CD4-positive, alpha-beta memory T cell (primary cell): ENCODE measurements at regions of chr12 and their contacts with region 1.

Region 1: DNA sequence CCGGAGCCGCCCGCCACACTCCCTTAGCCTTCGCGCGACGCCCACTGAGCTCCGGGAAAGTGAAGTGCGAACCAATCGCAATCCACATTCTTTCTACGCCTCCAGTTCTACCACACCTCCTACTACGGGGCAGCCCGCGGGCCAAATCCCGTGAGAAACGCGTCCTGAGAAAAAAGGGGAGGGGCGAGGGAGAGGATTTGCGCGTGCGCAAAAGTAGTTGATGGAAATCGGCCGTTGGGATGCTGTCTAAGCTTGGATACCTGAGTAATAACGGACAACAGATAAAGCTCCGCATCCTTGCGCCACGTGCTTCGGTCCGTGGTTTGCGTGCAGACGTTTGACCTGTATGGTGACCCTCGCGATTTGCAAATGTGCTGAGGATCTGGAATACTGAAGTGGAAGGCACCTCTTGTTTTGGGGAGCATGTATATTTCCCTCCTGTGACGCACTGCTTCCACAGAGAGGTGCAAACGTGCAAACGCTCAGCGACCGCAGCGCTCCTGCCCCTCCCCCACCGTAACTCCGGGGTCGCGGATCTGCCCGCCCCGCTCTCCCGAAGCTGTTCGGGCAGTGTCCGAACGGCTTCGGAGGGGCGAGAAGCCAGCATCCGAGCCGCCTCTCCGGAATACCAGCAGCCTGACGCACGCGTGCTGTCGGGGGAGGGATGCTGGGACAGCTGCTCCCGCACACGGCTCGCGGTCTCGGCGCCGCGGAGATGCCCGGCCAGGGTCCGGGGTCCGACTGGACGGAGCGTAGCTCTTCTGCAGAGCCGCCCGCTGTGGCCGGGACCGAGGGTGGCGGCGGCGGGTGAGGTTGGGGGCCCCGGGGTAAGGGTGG is at the starts of genes FAM216A and GPN3:
- DNase-seq: peak; percentile 97 to 98 (median 98)
- H3K4me3 ChIP-seq: peak within 1 kb of the TSS; percentile 93 to 97
- H3K4me3 Mint-ChIP-seq: peak within 1 kb of the TSS; percentile 96 to 100 (median 98)
- H3K27ac ChIP-seq: peak within 1 kb of the TSS; percentile 75
- H3K27ac Mint-ChIP-seq: peak within 1 kb of the TSS; percentile 91 to 98 (median 96)
- H3K4me1 ChIP-seq: peaks cover 25% of the 10 kb centered on the region
- H3K4me1 Mint-ChIP-seq: peaks cover 17 to 45% (median 34%) of the 10 kb centered on the region in 4 donors
- H3K27me3 ChIP-seq: no peaks in the 10 kb centered on the region
- H3K27me3 Mint-ChIP-seq: no peaks in the 10 kb centered on the region
- total RNA-seq, gene FAM216A: 16.4 to 16.9 TPM
- total RNA-seq, gene GPN3: 12.5 to 16.6 TPM

Region 2: DNA sequence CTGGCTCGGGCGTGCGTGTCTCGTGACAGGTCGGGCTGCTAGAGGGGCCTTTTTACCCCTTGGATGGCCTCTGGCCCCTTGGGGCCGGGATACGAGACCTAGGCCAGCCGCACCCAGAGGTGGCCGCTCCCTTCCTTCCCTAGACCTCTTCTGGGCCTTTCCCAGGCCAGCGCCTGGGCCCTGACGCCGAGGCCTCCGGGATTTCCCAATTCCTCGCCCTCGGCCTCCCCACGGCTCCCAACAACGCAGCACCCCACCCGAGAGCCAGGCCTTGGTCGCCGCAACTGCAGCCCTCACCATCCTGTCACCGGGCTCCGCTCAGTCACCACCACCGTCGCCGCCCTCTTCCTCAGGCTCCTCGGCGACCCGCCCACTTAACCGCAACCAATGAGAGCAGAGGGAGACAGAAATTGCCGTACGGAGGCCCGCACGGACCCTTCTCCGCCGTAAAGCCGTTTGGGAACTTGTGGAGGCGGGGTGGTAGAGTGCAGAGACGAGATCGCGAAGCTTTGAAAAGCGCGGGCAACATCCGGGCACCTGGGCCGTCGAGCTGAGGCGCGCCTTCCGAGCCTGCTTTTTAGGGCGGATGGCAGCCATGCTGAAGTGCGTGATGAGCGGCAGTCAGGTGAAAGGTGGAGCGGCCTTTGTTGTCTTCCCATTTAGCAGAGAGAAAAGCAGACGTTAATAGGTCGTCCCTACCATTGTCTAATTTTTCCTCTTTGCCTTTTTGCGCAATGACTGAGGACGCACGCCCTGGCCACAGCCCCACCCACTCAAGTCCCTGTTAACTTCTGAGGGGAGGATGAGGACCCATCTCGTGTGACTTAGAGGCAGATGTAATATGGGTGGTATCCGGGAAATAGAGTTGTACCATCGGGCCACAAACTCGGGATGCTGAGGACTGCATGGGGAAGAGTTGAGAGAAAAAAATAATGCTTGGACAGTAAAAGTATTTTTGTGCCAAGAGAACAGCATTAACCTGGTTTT is 33.6 kb after region 1 on chr12 and contains the starts of genes RAD9B and VPS29:
- CTCF ChIA-PET with region 1: interaction called, 43 read pairs
- POLR2A ChIA-PET with region 1: interaction called, 74 read pairs
- intact Hi-C with region 1: loop called (anchors 1 kb)
- DNase-seq: peak; percentile 99 to 100 (median 99)
- H3K4me3 ChIP-seq: peak within 1 kb of the TSS; percentile 85 to 91
- H3K4me3 Mint-ChIP-seq: peak within 1 kb of the TSS; percentile 96 to 99 (median 98)
- H3K27ac ChIP-seq: peak within 1 kb of the TSS; percentile 94
- H3K27ac Mint-ChIP-seq: peak within 1 kb of the TSS; percentile 95 to 99 (median 97)
- H3K4me1 ChIP-seq: peaks cover 35% of the 10 kb centered on the region
- H3K4me1 Mint-ChIP-seq: peaks cover 20 to 44% (median 30%) of the 10 kb centered on the region in 4 donors
- H3K27me3 ChIP-seq: no peaks in the 10 kb centered on the region
- H3K27me3 Mint-ChIP-seq: no peaks in the 10 kb centered on the region
- total RNA-seq, gene RAD9B: 1.1 to 2.1 TPM
- total RNA-seq, gene VPS29: 117 to 121 TPM

Region 3: DNA sequence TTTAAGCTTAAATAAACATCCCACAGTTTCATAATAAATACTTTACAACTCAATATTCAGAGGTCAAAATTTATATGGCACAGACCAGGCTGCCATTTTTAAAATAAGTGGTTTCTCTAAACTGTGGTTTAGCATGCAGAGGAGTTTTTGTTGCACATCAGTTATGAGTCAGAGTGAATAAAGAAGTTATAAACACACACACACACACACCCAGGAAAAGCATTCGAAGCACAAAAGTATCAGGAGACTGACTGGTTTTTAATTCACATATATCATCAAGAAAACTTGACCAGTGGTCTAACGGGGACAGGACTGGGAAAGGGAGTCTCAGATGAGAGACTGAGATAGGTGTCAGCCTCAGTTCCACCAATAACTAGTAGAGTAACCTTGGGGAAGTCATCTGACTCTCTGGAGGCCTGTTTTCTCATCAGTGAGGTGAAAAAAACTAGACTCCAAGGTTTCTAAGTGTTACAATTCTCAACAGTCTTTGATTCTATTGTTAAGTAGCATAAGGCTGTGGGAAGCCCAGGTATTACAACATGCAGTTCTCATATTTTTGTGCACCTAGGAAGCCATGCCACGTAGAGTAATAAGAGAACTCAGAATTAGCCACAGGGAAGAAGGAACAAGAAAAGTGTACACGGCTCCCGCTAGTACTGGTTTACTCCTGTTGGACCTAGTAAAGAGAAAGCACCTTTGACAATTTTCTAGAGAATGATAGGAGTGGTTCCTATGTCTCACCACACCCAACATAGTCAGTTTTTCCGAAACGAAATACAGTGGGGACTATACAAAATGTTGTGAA is 109.5 kb after region 1 on chr12:
- CTCF ChIA-PET with region 1: interaction called, 3 read pairs
- POLR2A ChIA-PET with region 1: interaction called, 10 read pairs
- intact Hi-C with region 1: loop called (anchors 1 kb)
- DNase-seq: peak in 4 of 5 donors; percentile 36 to 86 (median 38)
- H3K4me3 ChIP-seq: peak overlapping the region; percentile 2 to 25
- H3K4me3 Mint-ChIP-seq: peak overlapping the region; percentile 58 to 97 (median 78)
- H3K27ac ChIP-seq: peak overlapping the region; percentile 66
- H3K27ac Mint-ChIP-seq: peak overlapping the region; percentile 69 to 96 (median 92)
- H3K4me1 ChIP-seq: peaks cover 80% of the 10 kb centered on the region
- H3K4me1 Mint-ChIP-seq: peaks cover 50 to 82% (median 68%) of the 10 kb centered on the region in 4 donors
- H3K27me3 ChIP-seq: no peaks in the 10 kb centered on the region
- H3K27me3 Mint-ChIP-seq: no peaks in the 10 kb centered on the region

Region 4: GRCh38 chr12:110606253-110606611 is 137.8 kb after region 1 on chr12:
- CTCF ChIA-PET with region 1: interaction called, 102 read pairs
- POLR2A ChIA-PET with region 1: interaction called, 25 read pairs
- intact Hi-C with region 1: no loop called
- DNase-seq: no peak
- H3K4me3 ChIP-seq: peak overlapping the region in 1 of 2 donors; percentile 65
- H3K4me3 Mint-ChIP-seq: peak overlapping the region; percentile 78 to 93 (median 88)
- H3K27ac ChIP-seq: no peak overlapping the region
- H3K27ac Mint-ChIP-seq: peak overlapping the region in 6 of 7 donors; percentile 66 to 90 (median 74)
- H3K4me1 ChIP-seq: peaks cover 6% of the 10 kb centered on the region
- H3K4me1 Mint-ChIP-seq: peaks cover 2 to 9% (median 4%) of the 10 kb centered on the region in 4 donors
- H3K27me3 ChIP-seq: no peaks in the 10 kb centered on the region
- H3K27me3 Mint-ChIP-seq: no peaks in the 10 kb centered on the region

Region 5: DNA sequence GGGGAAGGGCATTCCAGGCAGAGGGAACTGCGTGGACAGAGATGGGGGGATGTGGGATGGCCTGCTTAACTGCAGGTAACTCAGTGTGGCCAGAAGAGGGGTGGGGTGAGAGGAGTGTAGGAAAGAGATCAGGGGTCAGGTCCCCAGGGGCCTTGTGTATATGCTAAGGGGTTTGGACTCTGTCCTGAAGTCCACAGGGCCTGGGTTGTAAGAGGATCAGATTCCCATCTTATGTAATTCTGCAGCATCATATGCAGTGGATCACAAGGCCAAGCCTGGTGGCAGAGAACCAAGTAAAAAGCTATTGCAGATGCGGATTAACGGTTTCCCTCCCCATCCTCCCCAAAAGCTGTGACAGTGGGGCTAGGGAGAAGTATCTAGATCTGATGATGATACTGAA is 154.2 kb after region 1 on chr12:
- CTCF ChIA-PET with region 1: no interaction called
- POLR2A ChIA-PET with region 1: no interaction called
- intact Hi-C with region 1: no loop called
- DNase-seq: no peak
- H3K4me3 ChIP-seq: no peak overlapping the region
- H3K4me3 Mint-ChIP-seq: no peak overlapping the region
- H3K27ac ChIP-seq: no peak overlapping the region
- H3K27ac Mint-ChIP-seq: no peak overlapping the region
- H3K4me1 ChIP-seq: peaks cover 6% of the 10 kb centered on the region
- H3K4me1 Mint-ChIP-seq: peaks cover 0 to 5% (median 1%) of the 10 kb centered on the region in 4 donors
- H3K27me3 ChIP-seq: no peaks in the 10 kb centered on the region
- H3K27me3 Mint-ChIP-seq: no peaks in the 10 kb centered on the region

Region 6: DNA sequence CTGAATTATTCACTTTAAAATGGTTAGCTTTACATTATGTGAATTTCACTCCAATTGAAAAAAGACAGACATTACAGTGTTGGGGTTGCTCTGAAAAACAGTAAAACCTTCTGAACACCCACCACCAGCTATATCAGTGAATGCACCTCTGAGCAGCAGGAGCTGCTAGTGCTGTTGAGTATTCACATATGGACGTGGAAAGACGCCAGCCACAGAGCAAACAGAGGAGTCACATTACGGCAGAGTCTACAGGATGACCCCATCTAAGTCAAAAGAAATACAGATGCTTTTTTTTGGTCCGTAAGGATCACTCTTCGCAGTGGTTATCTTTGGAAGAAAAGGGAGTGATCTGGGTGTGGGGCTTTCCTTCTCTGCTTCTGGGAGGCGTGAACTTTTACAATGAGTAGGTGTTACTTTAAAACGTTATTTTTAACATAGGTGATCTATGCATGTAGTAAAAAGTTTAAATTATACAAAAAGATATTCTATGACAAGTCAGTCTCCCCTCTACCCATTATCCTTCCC is 215.9 kb after region 1 on chr12:
- CTCF ChIA-PET with region 1: no interaction called
- POLR2A ChIA-PET with region 1: no interaction called
- intact Hi-C with region 1: no loop called
- DNase-seq: no peak
- H3K4me3 ChIP-seq: no peak overlapping the region
- H3K4me3 Mint-ChIP-seq: peak overlapping the region in 1 of 8 donors; percentile 27
- H3K27ac ChIP-seq: no peak overlapping the region
- H3K27ac Mint-ChIP-seq: no peak overlapping the region
- H3K4me1 ChIP-seq: peaks cover 13% of the 10 kb centered on the region
- H3K4me1 Mint-ChIP-seq: peaks cover 6 to 40% (median 14%) of the 10 kb centered on the region in 4 donors
- H3K27me3 ChIP-seq: no peaks in the 10 kb centered on the region
- H3K27me3 Mint-ChIP-seq: peaks cover 0 to 5% of the 10 kb centered on the region in 2 donors

Region 7: DNA sequence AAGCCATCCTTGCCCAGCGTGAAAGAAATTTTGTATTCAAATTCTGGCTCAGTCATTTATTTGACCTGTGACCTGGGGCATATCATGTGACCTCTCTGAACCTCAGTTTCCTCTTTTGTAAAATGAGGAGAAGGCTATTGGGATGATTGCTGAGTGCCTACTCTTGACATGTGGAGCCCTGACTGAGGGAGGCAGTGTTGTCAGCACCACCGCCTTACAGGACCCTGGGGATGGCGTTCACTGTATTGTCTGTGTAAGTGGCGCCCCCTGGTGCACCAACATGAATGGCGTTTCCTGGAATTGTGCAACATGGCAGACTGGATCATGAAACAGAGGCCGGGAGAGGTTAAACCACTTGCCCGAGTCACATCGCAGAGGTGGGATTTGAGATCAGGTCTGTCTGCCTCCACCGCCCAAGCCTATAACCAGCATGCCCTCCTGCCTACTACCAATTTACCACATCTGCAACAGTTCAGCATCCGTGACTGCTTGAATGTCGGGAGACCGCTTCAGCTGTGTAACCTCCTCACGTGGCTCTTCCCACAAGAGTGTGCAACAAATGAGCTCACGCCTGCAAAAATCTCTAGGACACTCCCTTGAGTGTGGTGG is 358.3 kb after region 1 on chr12:
- CTCF ChIA-PET with region 1: no interaction called
- POLR2A ChIA-PET with region 1: no interaction called
- intact Hi-C with region 1: loop called (anchors 1 kb)
- DNase-seq: peak; percentile 73 to 83 (median 77)
- H3K4me3 ChIP-seq: peak overlapping the region in 1 of 2 donors; percentile 5
- H3K4me3 Mint-ChIP-seq: peak overlapping the region; percentile 36 to 76 (median 66)
- H3K27ac ChIP-seq: no peak overlapping the region
- H3K27ac Mint-ChIP-seq: peak overlapping the region in 3 of 7 donors; percentile 9 to 89 (median 60)
- H3K4me1 ChIP-seq: peaks cover 6% of the 10 kb centered on the region
- H3K4me1 Mint-ChIP-seq: peaks cover 3 to 7% (median 7%) of the 10 kb centered on the region in 4 donors
- H3K27me3 ChIP-seq: no peaks in the 10 kb centered on the region
- H3K27me3 Mint-ChIP-seq: peaks cover 1 to 4% of the 10 kb centered on the region in 2 donors